HAP-1 (cell line): ENCODE measurements at regions of chr10 and their contacts with region 1.

Region 1: GRCh38 chr10:121886997-121887622 is 40.7 kb downstream of the ATE1 start:
- DNase-seq: peak; percentile 60 to 79
- H3K4me3 ChIP-seq: no peak overlapping the region
- H3K4me1 ChIP-seq: peaks cover 3% of the 10 kb centered on the region
- H3K27me3 ChIP-seq: no peaks in the 10 kb centered on the region

Region 2: GRCh38 chr10:121823993-121824463 is 63.1 kb before region 1 on chr10:
- in situ Hi-C with region 1: loop called (anchors 5 kb)
- DNase-seq: peak; percentile 22 to 53
- H3K4me3 ChIP-seq: no peak overlapping the region
- H3K4me1 ChIP-seq: peaks cover 9% of the 10 kb centered on the region
- H3K27me3 ChIP-seq: no peaks in the 10 kb centered on the region